ENCODE measurements at regions of chr11 and their contacts with region 1.

Region 1: DNA sequence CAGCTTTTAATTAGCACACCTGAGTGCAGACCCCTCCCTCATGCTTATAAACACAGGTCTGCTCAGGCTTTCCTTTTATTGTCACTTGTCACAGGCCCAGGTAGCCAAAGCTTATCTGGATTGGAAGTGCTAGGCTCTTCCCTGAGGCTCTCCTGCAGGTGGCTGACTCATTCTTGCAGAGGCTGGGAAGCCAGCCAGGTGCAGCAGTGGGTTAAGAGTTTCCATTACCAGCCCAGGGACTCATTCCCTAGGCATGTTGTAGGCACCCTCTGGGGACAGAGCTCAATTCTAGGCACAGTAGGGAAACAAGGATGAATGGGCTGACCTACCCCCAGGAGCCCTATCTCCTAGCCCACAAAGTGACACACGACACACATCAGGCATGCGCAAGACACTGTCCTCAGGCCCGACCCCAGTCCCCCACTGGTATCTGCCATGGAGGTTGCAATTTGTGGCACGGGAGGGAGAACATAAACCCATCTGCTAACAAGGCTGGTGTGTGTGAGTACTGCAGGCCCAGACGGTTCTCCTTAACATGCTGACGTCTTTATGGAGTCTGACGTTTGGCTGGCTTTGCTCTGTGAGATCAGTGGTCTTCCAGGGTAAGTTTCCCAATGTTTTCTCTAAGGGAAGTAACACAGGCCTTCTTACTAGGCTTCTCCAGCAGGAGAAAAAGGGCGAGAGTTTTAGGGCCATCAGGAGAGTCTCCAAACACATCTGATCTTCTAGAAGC is 94.2 kb downstream of the ABTB2 start:
- DNase-seq: peak; percentile 90
- H3K4me3 Mint-ChIP-seq: no peak overlapping the region
- H3K27ac Mint-ChIP-seq: no peak overlapping the region
- H3K4me1 Mint-ChIP-seq: peaks cover 20% of the 10 kb centered on the region
- H3K27me3 Mint-ChIP-seq: no peaks in the 10 kb centered on the region
- CTCF ChIP-seq: no peak

Region 2: GRCh38 chr11:34274723-34275401 is 11.3 kb after region 1 on chr11:
- CTCF ChIA-PET with region 1: no interaction called
- POLR2A ChIA-PET with region 1: interaction called, 5 read pairs
- intact Hi-C with region 1: loop called (anchors 1 kb)
- DNase-seq: peak; percentile 99
- H3K4me3 Mint-ChIP-seq: no peak overlapping the region
- H3K27ac Mint-ChIP-seq: no peak overlapping the region
- H3K4me1 Mint-ChIP-seq: peaks cover 7% of the 10 kb centered on the region
- H3K27me3 Mint-ChIP-seq: no peaks in the 10 kb centered on the region
- CTCF ChIP-seq: no peak

Region 3: DNA sequence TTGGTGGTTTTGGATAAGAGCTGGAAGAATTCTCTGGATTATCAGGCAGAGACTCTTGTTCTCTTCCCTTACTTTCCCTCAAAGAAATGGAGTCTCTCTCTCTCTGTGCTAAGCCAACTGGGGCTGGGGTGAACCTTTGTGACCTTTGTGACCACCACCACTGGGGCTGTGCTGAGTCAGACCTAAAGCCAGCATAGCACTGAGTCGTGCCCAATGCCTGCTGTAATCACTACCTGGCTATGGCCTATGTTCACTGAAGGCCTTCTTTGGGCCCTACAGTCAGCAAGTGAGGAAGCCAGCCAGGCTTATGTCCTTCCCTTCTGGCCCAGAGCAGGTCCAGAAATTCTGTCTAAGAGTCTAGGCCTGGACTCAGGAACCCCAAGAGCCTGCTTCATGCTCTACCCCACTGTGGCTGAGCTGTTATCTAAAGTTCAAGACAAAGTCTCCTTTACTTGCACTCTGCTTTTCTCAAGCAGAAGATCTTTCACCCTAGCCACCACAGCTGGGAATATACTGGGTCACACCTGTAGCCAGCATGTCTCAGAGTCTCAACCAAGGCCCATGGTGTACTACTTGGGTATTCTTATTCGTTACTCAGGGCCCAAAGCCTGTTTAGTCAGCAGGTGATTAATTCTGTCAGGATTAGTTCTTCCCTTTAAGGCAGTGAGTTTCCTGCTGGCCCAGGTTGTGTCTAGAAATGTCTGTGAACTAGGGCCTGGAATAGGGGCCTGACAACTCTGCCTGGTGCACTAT is 443.3 kb after region 1 on chr11:
- CTCF ChIA-PET with region 1: no interaction called
- POLR2A ChIA-PET with region 1: no interaction called
- intact Hi-C with region 1: no loop called
- DNase-seq: no peak
- H3K4me3 Mint-ChIP-seq: no peak overlapping the region
- H3K27ac Mint-ChIP-seq: no peak overlapping the region
- H3K4me1 Mint-ChIP-seq: no peaks in the 10 kb centered on the region
- H3K27me3 Mint-ChIP-seq: no peaks in the 10 kb centered on the region
- CTCF ChIP-seq: no peak